ENCODE measurements at regions of chr1 and their contacts with region 1.

Region 1: GRCh38 chr1:27122652-27123051 is 32.3 kb downstream of the SLC9A1 start:
- DNase-seq: peak; percentile 67 to 75
- H3K4me3 ChIP-seq: no peak overlapping the region
- H3K27ac ChIP-seq: peak overlapping the region; percentile 50; the same call in 1 of the 2 replicates
- H3K4me1 ChIP-seq: peaks cover 21% of the 10 kb centered on the region
- H3K27me3 ChIP-seq: no peaks in the 10 kb centered on the region
- CTCF ChIP-seq: no peak

Region 2: DNA sequence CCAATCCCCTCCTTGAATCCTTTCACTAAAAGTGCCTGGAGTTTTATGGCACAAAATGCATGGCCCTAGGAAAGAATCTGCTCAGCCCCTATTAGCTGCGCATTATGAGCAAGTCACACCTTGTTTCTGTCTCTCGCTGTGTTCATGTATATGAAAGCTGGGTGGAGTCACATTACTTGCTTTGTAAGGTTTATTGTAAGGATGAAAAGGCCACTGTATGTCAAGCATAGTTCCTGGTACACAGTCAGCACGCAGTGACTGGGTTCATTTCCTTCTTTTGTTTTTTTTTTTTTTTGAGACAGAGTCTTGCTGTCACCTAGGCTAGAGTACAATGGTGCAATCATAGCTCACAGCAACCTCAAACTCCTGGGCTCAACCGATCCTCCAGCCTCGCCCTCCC is 38.9 kb after region 1 on chr1:
- CTCF ChIA-PET with region 1: no interaction called
- POLR2A ChIA-PET with region 1: no interaction called
- intact Hi-C with region 1: no loop called
- DNase-seq: peak; percentile 40 to 92
- H3K4me3 ChIP-seq: no peak overlapping the region
- H3K27ac ChIP-seq: peak overlapping the region; percentile 80
- H3K4me1 ChIP-seq: peaks cover 20% of the 10 kb centered on the region
- H3K27me3 ChIP-seq: no peaks in the 10 kb centered on the region
- CTCF ChIP-seq: no peak

Region 3: DNA sequence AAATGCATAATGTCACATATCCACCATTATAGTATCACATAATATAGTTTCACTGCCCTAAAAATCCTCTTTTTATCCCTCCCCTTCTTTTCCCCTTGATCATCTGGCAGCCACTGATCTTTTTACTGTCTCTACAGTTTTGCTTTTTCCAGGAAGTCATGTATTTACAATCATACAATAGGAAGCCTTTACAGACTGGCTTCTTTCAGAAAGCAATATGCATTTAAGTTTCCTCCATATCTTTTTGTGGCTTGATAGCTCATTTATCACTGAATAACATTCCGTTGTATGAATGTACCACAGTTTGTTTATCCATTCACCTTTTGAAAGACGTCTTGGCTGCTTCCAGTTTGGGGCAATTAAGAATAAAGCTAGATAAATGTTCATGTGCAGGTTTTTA is 97.4 kb after region 1 on chr1:
- CTCF ChIA-PET with region 1: no interaction called
- POLR2A ChIA-PET with region 1: interaction called, 16 read pairs
- intact Hi-C with region 1: no loop called
- DNase-seq: no peak
- H3K4me3 ChIP-seq: no peak overlapping the region
- H3K27ac ChIP-seq: no peak overlapping the region
- H3K4me1 ChIP-seq: no peaks in the 10 kb centered on the region
- H3K27me3 ChIP-seq: no peaks in the 10 kb centered on the region
- CTCF ChIP-seq: no peak

Region 4: GRCh38 chr1:27234049-27234882 is 111.6 kb after region 1 on chr1 and contains the start of gene WDTC1:
- CTCF ChIA-PET with region 1: no interaction called
- POLR2A ChIA-PET with region 1: interaction called, 38 read pairs
- intact Hi-C with region 1: no loop called
- DNase-seq: peak; percentile 80 to 97
- H3K4me3 ChIP-seq: peak within 1 kb of the TSS; percentile 58
- H3K27ac ChIP-seq: no peak within 1 kb of the TSS
- H3K4me1 ChIP-seq: peaks cover 9% of the 10 kb centered on the region; the same call in 1 of the 2 replicates
- H3K27me3 ChIP-seq: no peaks in the 10 kb centered on the region
- CTCF ChIP-seq: no peak
- total RNA-seq, gene WDTC1: 37.1 and 39.2 TPM in 2 replicates